ENCODE measurements at regions of chr12 and their contacts with region 1.

Region 1: GRCh38 chr12:115398311-115398781 is 714.4 kb upstream of the TBX3 start:
- DNase-seq: peak; percentile 86
- ATAC-seq: peak; percentile 97
- H3K4me3 ChIP-seq: no peak overlapping the region
- H3K27ac ChIP-seq: no peak overlapping the region
- H3K4me1 ChIP-seq: peaks cover 22% of the 10 kb centered on the region; the same call in 1 of the 2 replicates
- H3K27me3 ChIP-seq: no peaks in the 10 kb centered on the region
- CTCF ChIP-seq: peak; percentile 96

Region 2: GRCh38 chr12:114625294-114625851 is 773.0 kb before region 1 on chr12:
- CTCF ChIA-PET with region 1: no interaction called
- POLR2A ChIA-PET with region 1: no interaction called
- intact Hi-C with region 1: no loop called
- DNase-seq: peak; percentile 74
- ATAC-seq: peak; percentile 96
- H3K4me3 ChIP-seq: no peak overlapping the region
- H3K27ac ChIP-seq: no peak overlapping the region
- H3K4me1 ChIP-seq: no peaks in the 10 kb centered on the region
- H3K27me3 ChIP-seq: peaks cover 19% of the 10 kb centered on the region; the same call in 1 of the 2 replicates
- CTCF ChIP-seq: peak; percentile 98

Region 3: GRCh38 chr12:115060477-115061168 is 337.7 kb before region 1 on chr12:
- CTCF ChIA-PET with region 1: no interaction called
- POLR2A ChIA-PET with region 1: no interaction called
- intact Hi-C with region 1: loop called (anchors 10 kb)
- DNase-seq: peak; percentile 89
- ATAC-seq: peak; percentile 94
- H3K4me3 ChIP-seq: no peak overlapping the region
- H3K27ac ChIP-seq: peak overlapping the region; percentile 67
- H3K4me1 ChIP-seq: peaks cover 17% of the 10 kb centered on the region
- H3K27me3 ChIP-seq: no peaks in the 10 kb centered on the region
- CTCF ChIP-seq: no peak

Region 4: DNA sequence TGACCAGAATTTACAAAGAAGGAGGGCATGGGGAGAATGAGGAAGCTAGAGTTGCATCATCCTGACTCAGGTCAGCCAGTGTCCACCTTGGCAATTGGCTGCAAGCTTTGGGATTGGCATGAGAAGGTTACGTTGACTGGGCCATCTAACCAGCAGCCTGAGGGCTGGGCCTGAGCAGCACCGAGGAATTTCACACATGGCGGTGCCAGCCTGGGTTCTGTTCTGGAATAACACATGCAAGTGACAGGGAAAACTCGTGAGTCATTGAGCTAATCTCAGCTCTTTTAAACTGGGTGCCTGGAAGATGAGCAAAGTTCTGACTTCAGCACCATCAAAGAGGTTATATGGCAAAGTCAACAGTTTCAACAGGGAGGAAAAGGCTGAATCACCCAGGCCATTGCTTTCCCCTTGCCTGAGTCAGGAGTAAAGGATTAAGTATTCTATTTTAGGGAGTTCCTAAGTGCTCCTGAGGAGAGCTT is 171.2 kb before region 1 on chr12:
- CTCF ChIA-PET with region 1: no interaction called
- POLR2A ChIA-PET with region 1: no interaction called
- intact Hi-C with region 1: loop called (anchors 1 kb)
- DNase-seq: peak; percentile 98
- ATAC-seq: peak; percentile 95
- H3K4me3 ChIP-seq: no peak overlapping the region
- H3K27ac ChIP-seq: peak overlapping the region; percentile 82
- H3K4me1 ChIP-seq: peaks cover 37% of the 10 kb centered on the region
- H3K27me3 ChIP-seq: no peaks in the 10 kb centered on the region
- CTCF ChIP-seq: no peak

Region 5: GRCh38 chr12:115857160-115857922 is 459.0 kb after region 1 on chr12:
- CTCF ChIA-PET with region 1: no interaction called
- POLR2A ChIA-PET with region 1: no interaction called
- intact Hi-C with region 1: no loop called
- DNase-seq: peak; percentile 22
- ATAC-seq: peak; percentile 35; the same call in 1 of the 2 replicates
- H3K4me3 ChIP-seq: no peak overlapping the region
- H3K27ac ChIP-seq: no peak overlapping the region
- H3K4me1 ChIP-seq: no peaks in the 10 kb centered on the region
- H3K27me3 ChIP-seq: peaks cover 64% of the 10 kb centered on the region
- CTCF ChIP-seq: no peak; the same call in 1 of the 2 replicates

Measured in PC-3 (cell line).